A673 (cell line): ENCODE measurements at regions of chr2 and their contacts with region 1.

Region 1: DNA sequence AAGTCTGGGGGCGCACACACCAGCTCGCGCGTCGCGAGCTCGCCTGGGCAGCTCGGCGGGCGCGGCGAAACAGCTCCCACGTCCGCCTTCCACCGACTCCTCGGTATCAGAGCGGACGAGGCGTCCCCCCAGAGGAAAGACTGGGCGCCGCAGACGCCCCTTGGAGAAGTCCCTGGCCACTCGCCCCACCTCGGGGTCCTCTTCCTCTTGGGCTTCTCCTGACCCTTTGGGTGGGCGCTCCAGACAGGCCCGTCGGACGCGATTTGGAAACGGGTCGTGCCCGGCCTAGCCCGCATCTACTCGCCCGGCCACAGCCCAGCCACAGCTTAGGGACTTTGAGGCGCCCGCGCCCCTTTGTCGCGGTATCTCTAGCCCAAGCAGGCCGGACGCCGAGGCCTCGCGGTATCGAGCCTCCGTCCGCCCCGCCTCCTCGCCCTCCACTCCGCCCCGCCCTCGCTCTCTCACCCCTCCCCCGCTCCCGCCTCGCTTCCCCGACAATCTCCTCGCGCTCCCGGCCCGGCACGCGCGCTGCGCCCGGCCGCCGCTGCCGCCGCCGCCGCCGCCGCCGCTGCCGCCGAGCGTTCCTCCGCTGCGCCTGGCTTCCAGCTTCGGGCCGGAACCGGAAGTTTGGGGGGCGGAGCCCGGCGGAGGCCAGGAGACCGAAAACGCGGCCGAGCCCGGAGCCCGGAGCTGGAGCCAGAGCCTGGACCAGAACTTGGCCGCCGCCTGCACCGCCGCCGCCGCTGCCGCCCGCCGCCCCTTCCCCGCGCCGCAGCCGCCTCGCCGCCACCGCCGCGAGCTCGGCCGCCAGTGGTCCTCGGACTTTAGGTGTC is 749 bp upstream of the ACVR2A start:
- DNase-seq: peak; percentile 95
- H3K4me3 ChIP-seq: peak overlapping the region; percentile 75
- H3K27ac ChIP-seq: peak overlapping the region; percentile 95
- H3K4me1 ChIP-seq: peaks cover 14% of the 10 kb centered on the region
- H3K27me3 ChIP-seq: no peaks in the 10 kb centered on the region
- CTCF ChIP-seq: 0 out of 2 replicates have a peak, but pooled peaks have one; percentile 18

Region 2: DNA sequence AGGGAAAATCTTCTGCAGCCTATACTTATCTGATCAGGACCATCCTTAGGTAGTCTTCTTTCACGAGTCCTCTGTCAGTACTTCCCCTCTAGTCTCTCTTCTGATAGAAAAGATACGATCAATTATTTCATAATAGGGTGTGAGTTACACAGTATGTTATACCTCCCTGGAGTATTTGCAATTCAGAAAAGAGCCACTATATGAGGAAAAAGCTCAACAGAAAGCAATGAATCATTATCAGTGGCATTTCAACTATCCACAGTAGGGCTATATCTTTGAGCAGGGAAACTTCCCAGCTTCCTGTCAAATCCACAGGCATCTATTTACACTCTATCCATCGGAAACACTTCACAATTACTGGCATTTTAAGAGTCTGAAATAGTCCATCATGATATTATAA is 104.6 kb before region 1 on chr2:
- CTCF ChIA-PET with region 1: no interaction called
- POLR2A ChIA-PET with region 1: interaction called, 12 read pairs
- intact Hi-C with region 1: no loop called
- DNase-seq: peak; percentile 85
- H3K4me3 ChIP-seq: no peak overlapping the region
- H3K27ac ChIP-seq: no peak overlapping the region
- H3K4me1 ChIP-seq: peaks cover 4% of the 10 kb centered on the region
- H3K27me3 ChIP-seq: no peaks in the 10 kb centered on the region
- CTCF ChIP-seq: no peak

Region 3: GRCh38 chr2:147763861-147764260 is 80.2 kb before region 1 on chr2:
- CTCF ChIA-PET with region 1: no interaction called
- POLR2A ChIA-PET with region 1: no interaction called
- intact Hi-C with region 1: no loop called
- DNase-seq: no peak
- H3K4me3 ChIP-seq: no peak overlapping the region
- H3K27ac ChIP-seq: no peak overlapping the region
- H3K4me1 ChIP-seq: no peaks in the 10 kb centered on the region
- H3K27me3 ChIP-seq: no peaks in the 10 kb centered on the region
- CTCF ChIP-seq: no peak

Region 4: DNA sequence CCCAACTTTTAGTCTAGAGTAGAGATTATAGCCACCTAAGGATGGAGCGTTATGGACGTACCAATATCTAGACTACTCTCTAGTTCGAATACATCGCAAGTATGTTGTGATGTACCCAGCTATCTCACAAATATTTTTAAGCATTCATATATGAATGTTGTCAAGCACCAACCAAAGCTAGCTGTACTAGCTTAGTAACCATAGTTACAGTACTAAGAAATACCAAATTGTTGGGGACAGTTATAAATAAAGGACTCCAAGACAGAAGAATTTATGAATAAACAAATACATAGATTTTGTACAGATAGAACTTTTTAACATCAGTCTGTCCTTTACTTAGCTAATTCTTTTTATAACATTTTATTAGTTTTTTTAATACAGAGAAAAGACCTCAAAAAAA is 78.2 kb after region 1 on chr2:
- CTCF ChIA-PET with region 1: no interaction called
- POLR2A ChIA-PET with region 1: no interaction called
- intact Hi-C with region 1: no loop called
- DNase-seq: no peak
- H3K4me3 ChIP-seq: no peak overlapping the region
- H3K27ac ChIP-seq: no peak overlapping the region
- H3K4me1 ChIP-seq: peaks cover 36% of the 10 kb centered on the region
- H3K27me3 ChIP-seq: no peaks in the 10 kb centered on the region
- CTCF ChIP-seq: no peak

Region 5: GRCh38 chr2:149573760-149574159 is 1729.7 kb after region 1 on chr2:
- CTCF ChIA-PET with region 1: no interaction called
- POLR2A ChIA-PET with region 1: no interaction called
- intact Hi-C with region 1: no loop called
- DNase-seq: peak; percentile 22
- H3K4me3 ChIP-seq: no peak overlapping the region
- H3K27ac ChIP-seq: no peak overlapping the region
- H3K4me1 ChIP-seq: no peaks in the 10 kb centered on the region
- H3K27me3 ChIP-seq: no peaks in the 10 kb centered on the region
- CTCF ChIP-seq: peak; percentile 50